Activated T-helper 2 cell treated with anti-CD3 and anti-CD28 coated beads, Interferon-gamma antibody, Interleukin-2, Interleukin-4, amounts not matched to agents 10 μg/mL and 5 μg/mL and 100 μg/mL, durations not matched to agents 14 hours and 24 hours and 36 hours (primary cell): ENCODE measurements at regions of chr15 and their contacts with region 1.

Region 1: GRCh38 chr15:43749690-43750345 is 3.6 kb downstream of the PDIA3 start:
- DNase-seq: peak; percentile 48
- H3K4me3 Mint-ChIP-seq: peak overlapping the region; percentile 63
- H3K27ac Mint-ChIP-seq: peak overlapping the region; percentile 72
- H3K4me1 Mint-ChIP-seq: peaks cover 33% of the 10 kb centered on the region
- H3K27me3 Mint-ChIP-seq: no peaks in the 10 kb centered on the region

Region 2: GRCh38 chr15:43029476-43029875 is 720.3 kb before region 1 on chr15:
- intact Hi-C with region 1: no loop called
- DNase-seq: no peak
- H3K4me3 Mint-ChIP-seq: no peak overlapping the region
- H3K27ac Mint-ChIP-seq: no peak overlapping the region
- H3K4me1 Mint-ChIP-seq: peaks cover 10% of the 10 kb centered on the region
- H3K27me3 Mint-ChIP-seq: no peaks in the 10 kb centered on the region

Region 3: DNA sequence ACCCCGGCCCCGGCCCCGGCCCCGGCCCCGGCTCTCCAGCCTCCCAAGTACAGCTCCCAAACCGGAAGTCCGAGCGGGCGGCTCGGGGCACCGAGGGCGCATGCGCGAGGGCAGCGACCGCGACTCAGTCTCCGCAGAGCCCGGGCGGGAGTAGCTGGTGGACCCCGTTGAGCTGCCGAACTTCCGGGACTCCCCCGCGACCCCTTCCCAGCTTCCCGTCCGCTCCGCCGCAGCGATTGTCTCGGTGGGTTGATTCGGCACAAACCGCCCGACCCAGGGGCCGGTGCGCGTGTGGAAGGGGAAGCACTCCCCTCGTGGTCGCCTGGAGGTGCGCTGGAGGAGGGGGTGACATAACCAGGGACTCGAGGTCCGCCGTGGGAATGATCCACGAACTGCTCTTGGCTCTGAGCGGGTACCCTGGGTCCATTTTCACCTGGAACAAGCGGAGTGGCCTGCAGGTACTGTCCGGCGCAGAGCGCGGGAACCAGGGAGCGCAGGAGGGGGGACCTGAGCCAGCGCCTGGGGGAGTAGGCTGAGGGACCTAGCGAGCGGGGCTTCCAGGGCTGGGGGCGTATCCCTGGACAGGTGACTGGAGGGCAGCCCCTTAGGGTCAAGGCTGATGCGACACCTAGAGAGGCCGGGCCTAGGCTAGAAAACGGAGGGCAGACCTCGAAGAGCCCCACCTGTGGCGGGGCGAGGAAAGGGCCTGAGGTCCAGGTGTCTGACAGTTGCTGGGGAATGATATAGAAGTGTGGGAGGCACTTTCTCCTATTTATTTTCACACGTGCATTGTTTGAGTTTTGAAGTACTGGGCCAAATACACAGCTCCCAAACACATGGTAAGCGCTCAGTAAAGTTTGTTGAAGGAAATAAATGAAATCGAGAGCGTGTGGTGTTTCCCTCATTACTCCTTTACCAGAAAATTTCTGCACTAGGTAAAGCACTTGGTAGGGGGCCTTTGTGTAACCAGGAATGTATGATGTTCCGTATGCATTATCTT is 378.5 kb before region 1 on chr15 and contains the starts of genes TUBGCP4 and ZSCAN29:
- intact Hi-C with region 1: no loop called
- DNase-seq: peak; percentile 78
- H3K4me3 Mint-ChIP-seq: peak within 1 kb of the TSS; percentile 88
- H3K27ac Mint-ChIP-seq: peak within 1 kb of the TSS; percentile 78
- H3K4me1 Mint-ChIP-seq: peaks cover 44% of the 10 kb centered on the region
- H3K27me3 Mint-ChIP-seq: no peaks in the 10 kb centered on the region
- total RNA-seq, gene TUBGCP4: 40.9 and 48.2 TPM in 2 replicates
- total RNA-seq, gene ZSCAN29: 31.4 and 33.1 TPM in 2 replicates

Region 4: GRCh38 chr15:43769584-43770228 is 19.9 kb after region 1 on chr15:
- intact Hi-C with region 1: loop called (anchors 2 kb)
- DNase-seq: peak; percentile 33
- H3K4me3 Mint-ChIP-seq: no peak overlapping the region
- H3K27ac Mint-ChIP-seq: peak overlapping the region; percentile 21
- H3K4me1 Mint-ChIP-seq: no peaks in the 10 kb centered on the region
- H3K27me3 Mint-ChIP-seq: no peaks in the 10 kb centered on the region

Region 5: DNA sequence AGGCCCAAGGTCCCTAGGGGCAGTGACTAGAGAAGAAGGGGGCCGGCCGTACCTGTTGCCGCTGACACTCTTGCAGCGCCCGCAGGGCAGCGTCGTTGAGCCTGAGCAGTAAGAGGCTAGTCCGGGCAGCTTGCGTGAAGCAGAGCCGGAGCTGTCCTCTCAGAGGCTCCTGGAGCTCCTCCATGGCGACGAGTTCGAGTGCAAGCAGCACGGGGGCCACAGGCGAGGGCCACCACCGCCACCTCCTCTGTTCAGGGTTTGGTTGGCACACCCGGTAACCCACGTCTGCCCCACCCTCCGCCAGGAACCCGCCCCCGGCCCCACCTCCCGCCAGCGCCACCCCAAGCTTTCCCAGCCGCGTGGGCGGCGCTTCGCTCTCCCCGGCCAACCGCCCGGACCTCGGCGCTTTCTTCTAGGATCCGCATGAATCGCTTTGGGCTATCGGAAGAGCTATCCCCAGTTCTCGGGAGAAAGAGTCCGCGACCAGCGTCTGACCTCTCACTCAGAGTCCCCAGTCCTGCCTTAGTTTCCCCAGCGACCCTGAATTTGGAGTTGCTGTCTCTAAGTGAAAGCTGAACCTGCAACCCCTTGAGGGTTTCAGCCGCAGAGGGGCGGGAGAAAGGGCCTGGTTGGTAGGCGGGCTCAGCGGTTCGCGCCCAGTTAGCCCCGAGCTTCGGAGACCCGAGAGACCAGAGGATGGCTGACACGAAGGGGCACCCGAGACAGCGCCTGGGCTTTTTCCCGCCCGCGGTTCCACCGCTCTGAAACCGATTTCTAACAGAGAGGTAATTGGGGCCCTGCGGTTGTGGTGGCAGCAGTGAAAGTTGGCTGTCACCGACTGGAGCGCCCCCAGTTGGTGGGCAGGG is 27.1 kb after region 1 on chr15 and contains the start of gene ELL3:
- intact Hi-C with region 1: loop called (anchors 2 kb)
- DNase-seq: peak; percentile 79
- H3K4me3 Mint-ChIP-seq: peak within 1 kb of the TSS; percentile 83
- H3K27ac Mint-ChIP-seq: peak within 1 kb of the TSS; percentile 83
- H3K4me1 Mint-ChIP-seq: peaks cover 7% of the 10 kb centered on the region
- H3K27me3 Mint-ChIP-seq: peaks cover 9% of the 10 kb centered on the region
- total RNA-seq, gene ELL3: 1.0 and 1.3 TPM in 2 replicates

Region 6: GRCh38 chr15:43791993-43792760 is 42.4 kb after region 1 on chr15 and contains the start of gene SERF2:
- intact Hi-C with region 1: loop called (anchors 2 kb)
- DNase-seq: peak; percentile 99
- H3K4me3 Mint-ChIP-seq: peak within 1 kb of the TSS; percentile 97
- H3K27ac Mint-ChIP-seq: peak within 1 kb of the TSS; percentile 97
- H3K4me1 Mint-ChIP-seq: peaks cover 25% of the 10 kb centered on the region
- H3K27me3 Mint-ChIP-seq: no peaks in the 10 kb centered on the region
- total RNA-seq, gene SERF2: 580 and 598 TPM in 2 replicates

Region 7: DNA sequence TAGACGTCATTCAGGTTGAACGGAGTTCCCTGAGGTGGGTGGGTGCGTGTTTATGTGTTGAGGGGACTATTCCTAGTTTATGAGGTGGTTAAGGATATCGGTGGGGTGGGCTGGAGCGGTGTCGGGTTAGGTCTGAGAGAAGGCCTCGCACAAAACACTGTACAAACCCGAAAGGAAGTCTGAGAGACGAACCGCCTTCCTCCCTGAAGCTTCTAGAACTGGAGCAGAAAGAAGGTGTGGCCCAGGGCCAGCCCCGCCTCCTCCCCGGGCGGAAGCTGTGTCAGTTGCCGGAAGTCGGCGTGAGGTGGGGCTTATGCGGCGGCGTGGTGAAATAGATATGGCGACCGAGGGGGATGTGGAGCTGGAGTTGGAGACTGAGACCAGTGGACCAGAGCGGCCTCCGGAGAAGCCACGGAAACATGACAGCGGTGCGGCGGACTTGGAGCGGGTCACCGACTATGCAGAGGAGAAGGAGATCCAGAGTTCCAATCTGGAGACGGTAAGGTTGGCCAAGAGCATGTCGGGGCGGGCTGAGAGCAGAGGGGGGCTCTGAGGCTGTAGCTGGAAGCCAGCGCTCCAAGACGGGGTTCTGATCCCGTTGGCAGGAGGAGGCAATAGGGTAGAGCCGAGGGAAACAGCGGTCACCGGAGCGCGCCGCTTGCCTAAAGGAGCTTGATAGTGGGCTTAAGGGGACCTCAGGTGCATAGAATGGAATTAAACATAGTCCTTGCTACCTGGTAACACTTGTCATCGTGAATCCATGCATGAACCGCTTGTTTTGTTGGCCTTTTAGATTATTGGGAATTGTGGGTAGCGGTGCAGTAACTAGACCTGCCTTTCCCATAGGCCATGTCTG is 50.7 kb after region 1 on chr15 and contains the start of gene HYPK:
- intact Hi-C with region 1: loop called (anchors 2 kb)
- DNase-seq: peak; percentile 88
- H3K4me3 Mint-ChIP-seq: peak within 1 kb of the TSS; percentile 100
- H3K27ac Mint-ChIP-seq: peak within 1 kb of the TSS; percentile 97
- H3K4me1 Mint-ChIP-seq: peaks cover 28% of the 10 kb centered on the region
- H3K27me3 Mint-ChIP-seq: no peaks in the 10 kb centered on the region
- total RNA-seq, gene HYPK: 23.6 and 24.3 TPM in 2 replicates